Activated T-helper 1 cell treated with anti-CD3 and anti-CD28 coated beads, Interleukin-12 subunit alpha, Interleukin-12 subunit beta, Interleukin-2, Interleukin-4 antibody, amounts not matched to agents 30 ng/mL and 10 ng/mL and 1 ng/mL, durations not matched to agents 14 hours and 24 hours and 36 hours (primary cell): ENCODE measurements at regions of chr6 and their contacts with region 1.

Region 1: DNA sequence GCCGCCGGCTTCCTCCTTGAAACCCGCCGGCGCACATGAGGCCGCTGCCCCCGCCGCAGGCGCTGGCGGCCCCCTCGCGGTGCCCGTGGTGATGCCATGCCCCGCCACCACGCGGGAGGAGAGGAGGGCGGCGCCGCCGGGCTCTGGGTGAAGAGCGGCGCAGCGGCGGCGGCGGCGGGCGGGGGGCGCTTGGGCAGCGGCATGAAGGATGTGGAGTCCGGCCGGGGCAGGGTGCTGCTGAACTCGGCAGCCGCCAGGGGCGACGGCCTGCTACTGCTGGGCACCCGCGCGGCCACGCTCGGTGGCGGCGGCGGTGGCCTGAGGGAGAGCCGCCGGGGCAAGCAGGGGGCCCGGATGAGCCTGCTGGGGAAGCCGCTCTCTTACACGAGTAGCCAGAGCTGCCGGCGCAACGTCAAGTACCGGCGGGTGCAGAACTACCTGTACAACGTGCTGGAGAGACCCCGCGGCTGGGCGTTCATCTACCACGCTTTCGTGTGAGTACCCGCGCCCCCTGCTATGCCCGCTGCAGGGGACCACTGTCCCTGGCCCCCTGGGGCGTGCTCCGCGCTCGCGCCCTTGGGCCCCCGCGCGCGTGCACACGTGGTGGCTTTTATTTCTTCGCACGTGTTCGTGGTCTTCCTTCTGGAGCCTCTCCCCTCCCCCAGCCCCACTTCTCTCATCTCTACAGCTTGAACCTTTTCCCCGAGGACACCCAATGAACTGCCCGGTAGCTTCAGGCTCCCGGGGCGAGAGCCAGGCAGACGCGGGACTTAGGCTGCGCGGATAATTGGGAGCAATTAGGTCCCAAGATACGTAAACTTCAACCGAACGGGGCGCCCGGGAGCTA is 453 bp downstream of the KCNQ5 start:
- DNase-seq: peak; percentile 31
- H3K4me3 Mint-ChIP-seq: peak overlapping the region; percentile 96
- H3K27ac Mint-ChIP-seq: peak overlapping the region; percentile 94
- H3K4me1 Mint-ChIP-seq: peaks cover 60% of the 10 kb centered on the region
- H3K27me3 Mint-ChIP-seq: peaks cover 5% of the 10 kb centered on the region

Region 2: DNA sequence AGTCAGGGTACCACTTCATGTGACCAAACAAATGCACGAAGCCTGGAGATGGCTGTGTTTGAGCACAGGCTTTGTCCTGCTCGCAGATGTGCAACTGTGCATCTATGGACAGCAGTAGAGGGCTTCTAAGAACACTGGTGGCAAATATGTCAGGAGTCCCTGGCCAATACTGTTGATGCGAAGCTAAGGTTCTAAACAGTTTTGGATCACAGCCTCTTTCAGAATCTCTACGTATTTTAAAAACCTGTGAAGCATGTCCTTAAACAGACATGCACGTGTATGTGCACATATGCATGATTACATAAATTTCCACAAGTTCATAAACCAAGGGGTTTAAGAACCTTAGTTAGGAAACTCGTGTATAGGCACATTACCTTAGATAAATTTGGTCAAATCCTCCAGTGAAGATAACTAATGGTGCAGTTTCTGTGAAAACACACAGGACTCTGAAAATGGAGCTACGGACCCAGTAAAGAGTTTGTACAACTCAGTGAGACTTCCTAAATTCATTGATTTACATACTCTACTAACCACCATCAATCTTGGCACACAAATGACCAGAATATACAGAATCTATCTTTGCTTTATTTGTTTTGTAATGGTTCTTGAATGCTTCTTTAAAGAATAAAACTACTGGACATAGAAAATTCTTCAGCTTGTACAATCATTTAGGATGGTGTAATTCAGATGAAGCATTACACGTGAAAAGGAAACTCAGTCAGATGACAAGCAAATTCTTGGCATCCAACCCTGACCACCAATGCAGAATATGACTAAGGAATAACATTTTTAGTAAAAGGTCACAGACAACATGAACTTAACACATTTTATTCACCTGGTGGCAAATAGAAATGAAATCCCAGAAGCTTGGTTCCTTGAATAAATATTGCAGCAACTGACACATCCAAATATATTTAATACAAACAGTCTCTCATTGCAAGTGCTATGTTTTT is 27.0 kb after region 1 on chr6:
- intact Hi-C with region 1: loop called (anchors 1 kb)
- DNase-seq: no peak
- H3K4me3 Mint-ChIP-seq: no peak overlapping the region
- H3K27ac Mint-ChIP-seq: no peak overlapping the region
- H3K4me1 Mint-ChIP-seq: peaks cover 36% of the 10 kb centered on the region
- H3K27me3 Mint-ChIP-seq: no peaks in the 10 kb centered on the region

Region 3: GRCh38 chr6:72661411-72661810 is 39.1 kb after region 1 on chr6:
- intact Hi-C with region 1: no loop called
- DNase-seq: no peak
- H3K4me3 Mint-ChIP-seq: no peak overlapping the region
- H3K27ac Mint-ChIP-seq: no peak overlapping the region
- H3K4me1 Mint-ChIP-seq: no peaks in the 10 kb centered on the region
- H3K27me3 Mint-ChIP-seq: no peaks in the 10 kb centered on the region

Region 4: DNA sequence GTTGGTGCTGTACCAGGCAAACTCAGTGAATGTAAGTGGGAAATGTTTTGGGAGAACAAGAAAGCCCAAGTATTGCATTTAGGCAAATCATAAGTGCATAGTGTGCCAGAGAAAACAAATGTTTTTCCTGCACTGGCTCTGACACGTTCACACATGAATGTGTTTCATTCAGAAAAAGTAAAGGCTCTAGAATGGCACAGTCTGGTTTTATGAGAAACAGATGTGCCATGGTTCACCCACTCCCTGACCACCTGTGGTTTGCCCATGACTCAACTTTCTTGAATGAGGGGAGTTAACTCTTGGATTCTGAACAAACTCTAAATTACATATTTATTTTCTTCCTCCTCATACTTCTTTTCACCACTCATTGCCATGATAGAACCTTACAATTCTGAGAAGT is 126.4 kb after region 1 on chr6:
- intact Hi-C with region 1: no loop called
- DNase-seq: no peak
- H3K4me3 Mint-ChIP-seq: no peak overlapping the region
- H3K27ac Mint-ChIP-seq: no peak overlapping the region
- H3K4me1 Mint-ChIP-seq: no peaks in the 10 kb centered on the region
- H3K27me3 Mint-ChIP-seq: peaks cover 2% of the 10 kb centered on the region

Region 5: GRCh38 chr6:72826037-72826436 is 203.7 kb after region 1 on chr6:
- intact Hi-C with region 1: loop called (anchors 2 kb)
- DNase-seq: no peak
- H3K4me3 Mint-ChIP-seq: no peak overlapping the region
- H3K27ac Mint-ChIP-seq: no peak overlapping the region
- H3K4me1 Mint-ChIP-seq: peaks cover 13% of the 10 kb centered on the region
- H3K27me3 Mint-ChIP-seq: no peaks in the 10 kb centered on the region

Region 6: GRCh38 chr6:73309769-73310502 is 687.6 kb after region 1 on chr6:
- intact Hi-C with region 1: loop called (anchors 5 kb)
- DNase-seq: peak; percentile 45
- H3K4me3 Mint-ChIP-seq: peak overlapping the region; percentile 95
- H3K27ac Mint-ChIP-seq: peak overlapping the region; percentile 72
- H3K4me1 Mint-ChIP-seq: peaks cover 25% of the 10 kb centered on the region
- H3K27me3 Mint-ChIP-seq: peaks cover 38% of the 10 kb centered on the region

Region 7: DNA sequence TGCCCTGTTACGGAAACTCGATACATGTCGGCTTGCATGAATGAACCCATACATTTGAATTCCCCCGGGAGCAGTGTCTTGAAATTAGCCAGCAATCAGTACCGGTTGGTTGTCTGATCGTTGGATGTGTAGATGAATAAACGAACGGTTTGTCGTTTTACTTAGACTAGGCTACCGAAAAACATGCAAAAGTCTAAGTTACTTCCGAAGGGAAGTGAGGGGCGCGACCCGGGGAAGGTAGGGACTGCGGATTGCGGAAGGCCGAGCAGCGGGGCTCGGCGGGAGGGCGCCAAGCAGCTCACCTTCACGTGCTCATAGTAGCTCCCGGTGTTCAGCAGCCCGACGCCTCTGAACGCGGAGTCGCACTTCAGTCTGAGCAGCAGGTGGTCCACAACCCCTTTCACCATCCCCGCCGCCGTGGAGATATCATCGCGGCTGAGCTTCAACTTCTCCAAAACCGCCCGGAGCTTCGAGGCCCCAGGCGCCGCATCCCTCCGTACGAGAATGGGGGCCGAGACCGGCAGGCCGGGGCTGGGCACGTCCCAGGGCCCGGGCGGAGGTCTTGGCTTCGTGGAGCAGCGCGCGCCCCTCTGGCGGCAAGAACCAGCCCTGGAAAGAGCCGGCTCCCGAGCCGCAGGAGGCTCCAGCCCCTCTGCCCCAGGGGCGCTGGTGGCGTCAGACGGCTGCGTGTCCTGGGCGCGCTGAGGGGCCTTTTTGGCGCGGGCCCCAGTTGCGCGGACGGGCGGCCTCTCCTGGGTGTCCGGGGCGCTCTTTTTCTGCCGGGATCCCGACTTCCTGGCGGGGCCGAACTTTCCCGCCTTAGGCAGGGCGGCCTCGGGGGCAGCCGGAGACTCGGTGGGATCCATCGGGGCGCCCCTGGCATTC is 829.1 kb after region 1 on chr6:
- intact Hi-C with region 1: loop called (anchors 2 kb)
- DNase-seq: peak; percentile 22
- H3K4me3 Mint-ChIP-seq: peak overlapping the region; percentile 97
- H3K27ac Mint-ChIP-seq: peak overlapping the region; percentile 87
- H3K4me1 Mint-ChIP-seq: peaks cover 35% of the 10 kb centered on the region
- H3K27me3 Mint-ChIP-seq: no peaks in the 10 kb centered on the region

Region 8: DNA sequence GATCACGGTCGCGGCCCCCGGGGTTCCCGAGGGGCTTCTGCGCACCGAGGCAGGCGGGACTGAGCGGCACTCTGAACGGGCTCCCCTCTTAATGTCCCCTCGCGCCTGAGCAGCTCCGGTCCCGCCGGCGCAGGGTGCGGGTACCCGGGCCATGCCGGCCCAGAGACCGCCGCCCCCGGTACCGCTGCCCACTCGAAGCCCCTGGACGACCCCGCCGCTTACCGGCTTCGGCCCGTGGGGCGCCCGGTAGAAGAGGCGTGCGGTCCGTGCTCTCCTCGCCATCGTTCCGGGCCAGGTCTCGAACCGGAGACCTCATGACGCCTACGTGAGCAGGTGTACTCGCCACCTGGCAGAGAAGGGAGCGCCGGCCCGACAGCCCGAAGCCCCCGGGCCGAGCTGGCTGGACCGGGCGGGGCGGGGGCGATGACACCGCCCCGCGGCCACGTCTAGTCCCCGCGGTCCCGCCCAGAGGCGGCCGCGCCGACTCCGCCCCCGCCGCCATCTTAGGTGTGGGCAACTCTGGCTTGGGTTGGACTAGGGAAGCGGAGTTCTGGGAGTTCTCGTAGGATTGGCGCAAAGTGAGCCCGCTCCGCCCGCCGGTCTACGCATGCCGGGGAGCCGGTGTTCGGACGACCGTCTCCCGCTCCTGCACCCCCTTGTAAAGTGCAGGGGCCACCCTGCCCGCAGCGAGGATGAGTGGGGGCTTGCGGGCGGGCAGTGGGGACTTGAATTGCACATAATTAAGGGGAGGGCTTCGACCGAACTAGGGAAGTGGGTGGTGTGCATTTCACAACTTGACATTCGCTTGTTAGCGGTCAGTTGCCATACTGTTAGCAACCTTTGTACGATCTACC is 1031.5 kb after region 1 on chr6 and contains the start of gene SLC17A5:
- intact Hi-C with region 1: loop called (anchors 2 kb)
- DNase-seq: peak; percentile 84
- H3K4me3 Mint-ChIP-seq: peak within 1 kb of the TSS; percentile 95
- H3K27ac Mint-ChIP-seq: peak within 1 kb of the TSS; percentile 95
- H3K4me1 Mint-ChIP-seq: peaks cover 25% of the 10 kb centered on the region
- H3K27me3 Mint-ChIP-seq: no peaks in the 10 kb centered on the region
- total RNA-seq, gene SLC17A5: 4.5 and 5.1 TPM in 2 replicates